GM12878 (cell line): ENCODE measurements at regions of chr13 and their contacts with region 1.

Region 1: DNA sequence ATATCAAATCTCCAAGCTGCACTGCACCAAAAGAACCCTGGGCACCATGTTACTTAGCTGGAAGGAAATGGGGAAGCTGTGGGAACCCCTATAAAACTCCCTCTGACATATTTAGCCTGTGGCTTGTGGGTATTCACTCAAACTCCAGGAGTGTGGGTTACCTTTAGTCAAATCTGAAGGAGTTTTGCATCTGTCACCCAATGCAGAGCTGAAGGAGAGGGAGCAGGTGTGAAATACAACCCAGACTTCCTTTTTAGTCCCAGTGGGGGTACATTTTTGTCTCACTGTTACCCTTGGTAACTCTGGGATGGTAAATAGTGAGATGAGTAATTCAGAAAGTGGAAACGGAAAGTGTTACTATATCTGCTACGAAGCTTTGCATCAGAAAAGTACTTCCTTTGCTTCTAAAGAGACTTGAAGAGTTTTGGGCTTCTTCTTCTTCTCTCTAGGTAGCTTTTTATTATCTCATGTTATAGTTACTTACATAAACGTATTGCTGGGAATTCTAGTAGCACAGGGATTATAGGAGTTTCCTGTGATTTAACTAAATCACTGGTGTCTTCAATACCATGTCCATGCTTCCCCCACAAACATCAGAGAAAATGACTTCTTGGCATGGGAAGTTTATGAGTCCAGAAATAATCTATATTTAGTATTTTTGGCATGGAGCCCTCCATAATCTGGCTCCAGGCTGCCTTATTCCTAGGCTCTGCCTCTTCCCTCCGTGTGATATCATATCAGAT is 105.9 kb downstream of the AKAP11 start:
- DNase-seq: peak; percentile 100
- ATAC-seq: peak; percentile 76
- H3K4me3 ChIP-seq: peak overlapping the region; percentile 18; the same call in 1 of the 2 replicates
- H3K27ac ChIP-seq: peak overlapping the region; percentile 99
- H3K4me1 ChIP-seq: peaks cover 53% of the 10 kb centered on the region
- H3K27me3 ChIP-seq: no peaks in the 10 kb centered on the region
- CTCF ChIP-seq: no peak
- EP300 ChIP-seq: peak; percentile 99 to 100
- POLR2A ChIP-seq: no peak
- RAD21 ChIP-seq: no peak; the same call in 1 of the 2 replicates

Region 2: GRCh38 chr13:42271337-42272114 is 106.3 kb before region 1 on chr13:
- CTCF ChIA-PET with region 1: interaction called, 3 read pairs
- POLR2A ChIA-PET with region 1: interaction called, 7 read pairs
- RAD21 ChIA-PET with region 1: interaction called, 7 read pairs
- SMC1A ChIA-PET with region 1: interaction called, 15 read pairs
- in situ Hi-C with region 1: no loop called
- intact Hi-C with region 1: loop called (anchors 1 kb)
- DNase-seq: peak; percentile 94
- ATAC-seq: peak; percentile 83
- H3K4me3 ChIP-seq: peak overlapping the region; percentile 90
- H3K27ac ChIP-seq: peak overlapping the region; percentile 77
- H3K4me1 ChIP-seq: peaks cover 12% of the 10 kb centered on the region
- H3K27me3 ChIP-seq: no peaks in the 10 kb centered on the region
- CTCF ChIP-seq: no peak
- EP300 ChIP-seq: peak in 1 of 2 experiments; percentile 65; a peak in 1 of 4 replicates
- POLR2A ChIP-seq: no peak
- RAD21 ChIP-seq: no peak

Region 3: GRCh38 chr13:42363941-42364612 is 13.7 kb before region 1 on chr13:
- CTCF ChIA-PET with region 1: interaction called, 6 read pairs
- POLR2A ChIA-PET with region 1: interaction called, 8 read pairs
- RAD21 ChIA-PET with region 1: interaction called, 5 read pairs
- SMC1A ChIA-PET with region 1: interaction called, 10 read pairs
- in situ Hi-C with region 1: no loop called
- intact Hi-C with region 1: no loop called
- DNase-seq: no peak
- ATAC-seq: no peak; the same call in 2 of the 3 replicates
- H3K4me3 ChIP-seq: no peak overlapping the region
- H3K27ac ChIP-seq: no peak overlapping the region
- H3K4me1 ChIP-seq: peaks cover 9% of the 10 kb centered on the region
- H3K27me3 ChIP-seq: no peaks in the 10 kb centered on the region
- CTCF ChIP-seq: no peak
- EP300 ChIP-seq: no peak
- POLR2A ChIP-seq: no peak
- RAD21 ChIP-seq: no peak

Region 4: GRCh38 chr13:42412812-42413483 is 35.1 kb after region 1 on chr13:
- CTCF ChIA-PET with region 1: interaction called, 7 read pairs
- POLR2A ChIA-PET with region 1: interaction called, 5 read pairs
- RAD21 ChIA-PET with region 1: interaction called, 76 read pairs
- SMC1A ChIA-PET with region 1: interaction called, 210 read pairs
- in situ Hi-C with region 1: no loop called
- intact Hi-C with region 1: no loop called
- DNase-seq: peak; percentile 72
- ATAC-seq: peak; percentile 83
- H3K4me3 ChIP-seq: no peak overlapping the region
- H3K27ac ChIP-seq: peak overlapping the region; percentile 96
- H3K4me1 ChIP-seq: peaks cover 46% of the 10 kb centered on the region
- H3K27me3 ChIP-seq: no peaks in the 10 kb centered on the region
- CTCF ChIP-seq: no peak
- EP300 ChIP-seq: peak; percentile 93
- POLR2A ChIP-seq: no peak
- RAD21 ChIP-seq: no peak

Region 5: DNA sequence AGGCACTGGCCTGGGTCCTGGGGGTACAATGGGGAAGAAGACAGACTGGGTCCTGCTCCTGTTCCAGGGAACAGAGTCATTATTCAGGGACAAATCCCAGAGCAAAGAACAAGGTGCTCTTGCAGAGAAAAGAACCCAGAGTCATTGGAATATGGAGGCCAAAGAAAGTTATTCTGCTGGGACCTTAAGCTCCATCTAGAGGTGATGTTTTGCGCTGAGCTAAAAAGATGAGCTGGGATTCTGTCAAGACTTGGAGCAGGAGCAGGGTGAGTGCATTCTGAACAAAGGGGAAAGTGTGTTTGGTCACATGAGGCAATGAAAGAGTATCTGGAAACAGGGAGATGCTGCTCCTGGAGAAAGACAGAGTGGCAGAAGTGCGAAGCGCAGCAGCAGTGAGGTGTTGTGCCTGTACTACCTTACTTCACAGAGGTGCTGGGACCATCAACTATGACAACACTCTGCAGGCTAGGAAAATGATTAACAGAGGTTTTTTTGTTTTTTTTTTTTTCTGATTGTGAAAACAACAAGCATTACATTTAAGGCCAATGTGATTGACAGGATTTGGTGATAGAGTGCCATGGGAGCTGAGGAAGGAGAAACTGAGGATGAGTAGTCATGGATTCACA is 100.8 kb after region 1 on chr13:
- CTCF ChIA-PET with region 1: interaction called, 39 read pairs
- POLR2A ChIA-PET with region 1: interaction called, 7 read pairs
- RAD21 ChIA-PET with region 1: interaction called, 27 read pairs
- SMC1A ChIA-PET with region 1: interaction called, 22 read pairs
- in situ Hi-C with region 1: no loop called
- intact Hi-C with region 1: loop called (anchors 1 kb)
- DNase-seq: no peak
- ATAC-seq: peak; percentile 90
- H3K4me3 ChIP-seq: no peak overlapping the region
- H3K27ac ChIP-seq: no peak overlapping the region
- H3K4me1 ChIP-seq: 0 out of 2 replicates have a peak, but pooled peaks cover 3% of the 10 kb centered on the region
- H3K27me3 ChIP-seq: no peaks in the 10 kb centered on the region
- CTCF ChIP-seq: peak; percentile 46 to 58 (median 47); a peak in 5 of 6 replicates
- EP300 ChIP-seq: no peak
- POLR2A ChIP-seq: no peak
- RAD21 ChIP-seq: peak; percentile 83

Region 6: GRCh38 chr13:42548731-42549551 is 171.1 kb after region 1 on chr13:
- CTCF ChIA-PET with region 1: interaction called, 3 read pairs
- POLR2A ChIA-PET with region 1: no interaction called
- RAD21 ChIA-PET with region 1: interaction called, 5 read pairs
- SMC1A ChIA-PET with region 1: interaction called, 3 read pairs
- in situ Hi-C with region 1: no loop called
- intact Hi-C with region 1: loop called (anchors 1 kb)
- DNase-seq: peak; percentile 98
- ATAC-seq: peak; percentile 97
- H3K4me3 ChIP-seq: peak overlapping the region; percentile 33
- H3K27ac ChIP-seq: peak overlapping the region; percentile 66
- H3K4me1 ChIP-seq: peaks cover 27% of the 10 kb centered on the region
- H3K27me3 ChIP-seq: no peaks in the 10 kb centered on the region
- CTCF ChIP-seq: no peak
- EP300 ChIP-seq: peak; percentile 99
- POLR2A ChIP-seq: 0 out of 2 replicates have a peak, but pooled peaks have one; percentile 19
- RAD21 ChIP-seq: peak; percentile 35; the same call in 1 of the 2 replicates